ENCODE measurements at regions of chr21 and their contacts with region 1.

Region 1: DNA sequence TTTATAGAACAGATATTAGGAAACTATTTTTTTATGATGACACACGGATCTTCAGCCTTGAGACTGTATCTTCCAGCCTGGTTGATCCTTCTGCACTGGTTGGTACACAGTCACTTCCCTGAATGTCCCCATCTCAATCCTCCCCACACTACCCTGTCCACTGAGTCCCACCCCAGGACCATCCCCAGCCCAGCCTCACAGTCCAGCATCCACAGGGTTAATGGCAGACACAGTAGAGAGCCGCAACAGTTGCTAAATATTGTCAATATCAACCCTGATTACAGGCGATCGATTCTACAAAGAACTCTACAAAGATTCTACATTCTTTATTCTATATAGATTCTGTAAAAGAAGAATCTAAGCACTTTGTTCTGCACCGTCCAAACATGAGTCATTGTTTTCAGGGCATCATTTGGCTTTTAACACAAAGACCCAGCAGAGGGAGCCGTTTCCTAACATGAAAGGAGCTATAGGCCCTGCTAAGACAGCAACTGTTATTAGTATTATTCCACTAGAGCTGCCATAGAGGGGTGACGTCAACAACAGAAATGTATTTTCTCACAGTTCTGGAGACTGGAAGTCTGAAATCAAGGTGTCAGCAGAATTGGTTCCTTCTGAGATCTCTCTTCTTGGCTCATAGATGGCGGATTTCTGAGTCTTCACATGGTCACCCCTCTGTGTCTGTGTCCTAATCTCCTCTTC is 30.1 kb upstream of the IFNAR2 start:
- DNase-seq: peak; percentile 88
- ATAC-seq: peak; percentile 87
- H3K4me3 Mint-ChIP-seq: no peak overlapping the region
- H3K27ac Mint-ChIP-seq: no peak overlapping the region
- H3K4me1 Mint-ChIP-seq: peaks cover 29% of the 10 kb centered on the region
- H3K27me3 Mint-ChIP-seq: no peaks in the 10 kb centered on the region

Region 2: GRCh38 chr21:32834916-32835235 is 364.8 kb before region 1 on chr21:
- CTCF ChIA-PET with region 1: interaction called, 24 read pairs
- POLR2A ChIA-PET with region 1: no interaction called
- intact Hi-C with region 1: loop called (anchors 1 to 2 kb)
- DNase-seq: no peak
- ATAC-seq: no peak
- H3K4me3 Mint-ChIP-seq: no peak overlapping the region
- H3K27ac Mint-ChIP-seq: no peak overlapping the region
- H3K4me1 Mint-ChIP-seq: peaks cover 2% of the 10 kb centered on the region
- H3K27me3 Mint-ChIP-seq: no peaks in the 10 kb centered on the region

Region 3: DNA sequence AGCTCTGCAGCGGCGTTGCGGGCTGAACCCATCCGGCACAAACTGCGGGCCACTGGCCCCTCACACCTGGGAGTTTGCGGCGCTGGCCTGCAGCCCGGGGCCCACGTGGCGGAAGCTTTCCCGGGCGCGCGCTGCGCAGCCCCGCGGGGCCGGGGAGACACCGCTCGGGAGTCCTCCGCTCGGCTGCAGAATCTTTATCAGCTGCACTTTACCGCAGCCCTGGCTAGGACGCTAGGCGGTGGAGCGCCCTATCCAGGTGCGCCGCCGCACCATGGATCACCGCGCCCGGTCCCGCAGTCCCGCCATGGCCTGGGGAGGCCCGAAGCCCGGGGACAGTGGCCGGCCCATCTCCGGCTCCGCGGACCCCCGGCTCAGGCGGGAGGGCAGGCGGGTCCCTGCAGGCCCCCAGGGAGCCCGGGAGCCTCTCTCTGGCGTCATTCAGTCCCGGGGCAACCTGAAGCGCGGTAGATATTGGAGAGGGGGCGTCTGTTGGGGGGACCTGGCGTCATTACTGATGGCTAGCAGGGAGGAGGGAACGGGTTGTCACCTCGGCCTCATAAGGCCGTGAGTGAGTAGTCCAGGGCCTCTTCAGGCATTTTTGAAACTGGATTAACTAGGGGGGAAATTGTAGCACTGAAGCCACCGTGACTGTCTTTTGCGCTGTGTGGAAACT is 179.6 kb before region 1 on chr21:
- CTCF ChIA-PET with region 1: interaction called, 4 read pairs
- POLR2A ChIA-PET with region 1: no interaction called
- intact Hi-C with region 1: loop called in 1 of 2 experiments (anchors 5 kb)
- DNase-seq: peak; percentile 55
- ATAC-seq: peak; percentile 62
- H3K4me3 Mint-ChIP-seq: peak overlapping the region; percentile 47
- H3K27ac Mint-ChIP-seq: no peak overlapping the region
- H3K4me1 Mint-ChIP-seq: peaks cover 26% of the 10 kb centered on the region
- H3K27me3 Mint-ChIP-seq: peaks cover 68% of the 10 kb centered on the region

Region 4: DNA sequence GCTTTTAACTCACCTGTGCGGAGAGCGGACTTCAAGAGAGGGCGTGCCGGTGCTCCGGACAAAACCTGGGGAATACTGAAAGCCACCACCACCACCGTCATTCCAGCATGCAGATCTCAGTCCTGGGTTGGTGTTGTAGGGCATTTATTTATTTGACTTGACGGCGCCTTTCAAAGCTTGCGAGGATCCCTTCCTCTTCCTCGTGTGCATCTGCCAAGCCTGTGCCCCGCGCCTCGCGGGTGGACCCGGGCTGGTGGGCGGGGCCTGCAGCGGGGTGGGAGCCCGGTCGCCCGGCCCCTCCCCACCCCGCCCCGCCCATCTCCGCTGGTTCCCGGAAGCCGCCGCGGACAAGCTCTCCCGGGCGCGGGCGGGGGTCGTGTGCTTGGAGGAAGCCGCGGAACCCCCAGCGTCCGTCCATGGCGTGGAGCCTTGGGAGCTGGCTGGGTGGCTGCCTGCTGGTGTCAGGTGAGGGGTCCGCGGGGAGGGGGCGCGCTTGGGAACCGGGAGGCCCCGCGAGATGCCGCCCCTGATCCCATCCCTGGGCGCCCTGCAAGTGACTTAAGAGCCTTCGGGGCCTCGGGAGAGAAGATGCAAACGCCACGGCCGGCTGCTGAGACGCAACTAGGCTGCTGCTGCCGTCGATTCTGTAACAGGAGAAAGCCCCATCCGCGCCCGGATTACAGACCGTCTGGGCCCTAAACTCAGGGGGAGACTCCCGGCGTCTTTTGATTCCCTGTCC is 66.6 kb after region 1 on chr21 and contains the start of gene IL10RB:
- CTCF ChIA-PET with region 1: interaction called, 6 read pairs
- POLR2A ChIA-PET with region 1: interaction called, 3 read pairs
- intact Hi-C with region 1: loop called (anchors 2 to 5 kb)
- DNase-seq: peak; percentile 84
- ATAC-seq: peak; percentile 64
- H3K4me3 Mint-ChIP-seq: peak within 1 kb of the TSS; percentile 90
- H3K27ac Mint-ChIP-seq: peak within 1 kb of the TSS; percentile 92
- H3K4me1 Mint-ChIP-seq: peaks cover 42% of the 10 kb centered on the region
- H3K27me3 Mint-ChIP-seq: no peaks in the 10 kb centered on the region
- total RNA-seq, gene IL10RB: 22.8 to 25.0 TPM

Region 5: DNA sequence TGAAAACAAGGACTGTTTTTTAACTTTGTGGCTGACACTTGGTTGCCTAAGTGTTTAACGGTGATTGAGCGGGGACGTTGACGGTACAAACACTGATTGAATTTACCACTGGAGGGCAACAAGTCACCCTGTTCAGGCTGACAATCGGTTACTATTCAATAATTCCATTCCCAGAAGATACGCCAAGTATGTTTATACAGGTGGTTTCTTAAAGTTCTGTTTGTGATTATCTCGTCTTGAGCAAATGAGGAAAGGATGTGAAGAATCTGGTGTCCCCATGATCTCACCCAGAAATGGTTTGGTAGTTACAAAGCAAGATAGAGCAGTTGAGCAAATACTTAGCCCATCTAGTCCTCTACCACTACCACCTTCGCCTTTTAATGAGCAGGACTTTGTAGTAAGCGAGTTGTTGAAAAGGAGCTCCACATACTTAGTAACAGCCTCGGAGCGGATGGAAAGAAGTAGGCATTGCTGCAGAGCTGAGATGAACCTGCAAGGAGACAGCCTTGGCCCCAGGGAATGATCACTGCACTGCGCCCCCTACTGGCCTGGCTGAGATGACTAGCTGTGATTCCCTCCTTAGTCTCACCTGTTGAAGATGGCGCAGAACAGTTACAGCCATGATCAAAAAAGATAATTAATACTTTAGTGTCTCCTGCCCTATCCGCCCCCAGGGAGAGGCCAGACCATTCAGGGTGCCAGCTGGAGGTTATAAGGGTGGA is 161.4 kb after region 1 on chr21:
- CTCF ChIA-PET with region 1: interaction called, 46 read pairs
- POLR2A ChIA-PET with region 1: interaction called, 3 read pairs
- intact Hi-C with region 1: loop called (anchors 1 to 2 kb)
- DNase-seq: peak; percentile 94
- ATAC-seq: peak; percentile 88
- H3K4me3 Mint-ChIP-seq: peak overlapping the region; percentile 72
- H3K27ac Mint-ChIP-seq: peak overlapping the region; percentile 75
- H3K4me1 Mint-ChIP-seq: peaks cover 16% of the 10 kb centered on the region
- H3K27me3 Mint-ChIP-seq: no peaks in the 10 kb centered on the region

Region 6: DNA sequence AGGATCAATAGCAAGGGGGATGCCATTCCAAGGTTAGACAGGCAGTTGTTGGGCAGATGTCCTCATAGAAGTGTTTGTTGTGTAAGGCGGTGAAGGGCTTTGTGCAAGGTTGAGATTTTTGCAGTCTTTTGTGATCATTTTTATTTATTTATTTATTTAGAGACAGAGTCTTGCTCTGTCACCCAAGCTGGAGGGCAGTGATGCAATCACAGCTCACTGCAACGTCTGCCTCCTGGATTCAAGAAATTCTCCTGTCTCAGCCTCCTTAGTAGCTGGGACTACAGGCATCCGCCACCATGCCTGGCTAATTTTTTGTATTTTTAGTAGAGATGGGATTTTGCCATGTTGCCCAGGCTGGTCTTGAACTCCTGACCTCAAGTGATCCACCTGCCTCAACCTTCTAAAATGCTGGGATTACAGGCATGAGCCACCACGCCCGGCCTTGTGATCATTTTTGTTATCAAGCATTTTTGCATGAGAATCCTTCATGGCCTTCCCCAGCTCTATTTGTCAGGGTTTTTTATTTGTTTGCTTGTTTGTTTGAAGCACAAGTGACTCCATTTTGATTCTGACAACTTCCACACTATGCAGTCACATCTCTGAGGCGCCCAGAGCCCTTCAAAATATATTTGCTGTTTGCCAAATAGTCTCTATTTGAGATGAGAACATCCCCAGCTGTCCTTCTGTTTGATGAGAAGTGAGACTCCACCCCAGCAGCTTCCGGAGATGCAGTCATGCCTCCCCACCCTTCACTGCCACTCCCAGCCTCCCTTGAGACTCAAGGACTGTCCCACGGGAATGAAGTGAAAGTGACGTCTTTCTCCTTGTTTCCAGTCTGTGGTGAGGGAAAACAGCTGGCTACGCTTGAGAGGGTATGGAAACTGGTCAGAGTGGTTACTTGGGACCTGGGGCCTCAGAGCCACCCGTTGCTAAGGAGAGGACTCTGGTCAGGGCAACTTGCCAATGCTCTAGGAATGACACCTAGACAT is 242.1 kb after region 1 on chr21:
- CTCF ChIA-PET with region 1: interaction called, 45 read pairs
- POLR2A ChIA-PET with region 1: interaction called, 3 read pairs
- intact Hi-C with region 1: loop called (anchors 1 kb)
- DNase-seq: no peak
- ATAC-seq: no peak
- H3K4me3 Mint-ChIP-seq: no peak overlapping the region
- H3K27ac Mint-ChIP-seq: peak overlapping the region; percentile 12
- H3K4me1 Mint-ChIP-seq: peaks cover 5% of the 10 kb centered on the region
- H3K27me3 Mint-ChIP-seq: no peaks in the 10 kb centered on the region

Measured in activated CD4-positive, alpha-beta T cell treated with anti-CD3 and anti-CD28 coated beads for 36 hours (primary cell).